ENCODE measurements at regions of chr1 and their contacts with region 1.

Region 1: DNA sequence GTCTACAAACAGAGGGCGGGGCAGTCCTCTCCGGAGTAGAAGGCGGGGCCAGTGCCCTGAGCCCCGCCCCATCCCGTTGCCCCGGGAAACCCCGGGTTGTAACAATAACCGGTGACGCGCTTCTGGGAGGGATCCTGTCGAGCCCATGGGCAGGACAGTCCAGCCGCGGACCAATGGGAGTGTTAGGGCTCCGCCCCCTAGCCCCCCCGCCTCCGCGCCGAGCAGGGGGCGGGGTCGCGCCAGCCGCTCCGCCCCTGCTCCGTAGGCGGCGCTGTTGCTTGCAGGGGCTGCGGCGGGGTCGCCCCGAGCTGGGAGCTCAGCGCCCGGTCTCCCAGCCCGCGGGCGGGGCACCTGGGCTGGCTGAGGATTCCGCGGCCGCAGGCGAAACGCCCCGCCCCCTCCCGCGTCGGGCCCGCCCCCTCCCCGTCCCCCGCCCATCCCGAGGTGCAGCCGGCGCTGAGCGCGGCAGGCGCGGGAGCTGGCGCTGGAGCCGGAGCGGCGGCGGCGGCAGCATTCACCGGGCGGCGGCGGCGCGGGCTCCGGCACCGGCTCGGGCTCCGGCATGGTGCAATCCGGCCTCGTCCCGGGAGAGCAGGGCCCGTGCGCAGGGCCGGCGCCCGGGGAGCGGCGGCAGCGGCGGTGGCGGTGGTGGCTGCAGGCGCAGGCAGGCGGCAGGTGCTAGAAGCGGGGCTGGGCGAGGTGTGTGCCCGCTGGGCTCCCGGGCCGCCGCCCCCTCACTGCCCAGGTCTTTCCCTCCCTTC is at the start of gene FOXO6:
- DNase-seq: peak; percentile 92 to 97
- ATAC-seq: peak; percentile 88 to 96 (median 93)
- H3K4me3 ChIP-seq: peak within 1 kb of the TSS; percentile 13
- H3K4me3 Mint-ChIP-seq: peak within 1 kb of the TSS; percentile 71
- H3K27ac ChIP-seq: peak within 1 kb of the TSS; percentile 1
- H3K27ac Mint-ChIP-seq: peak within 1 kb of the TSS; percentile 67 to 86
- H3K4me1 ChIP-seq: peaks cover 35% of the 10 kb centered on the region
- H3K4me1 Mint-ChIP-seq: peaks cover 0 to 32% of the 10 kb centered on the region in 2 donors
- H3K27me3 ChIP-seq: peaks cover 24% of the 10 kb centered on the region
- H3K27me3 Mint-ChIP-seq: peaks cover 31 to 43% of the 10 kb centered on the region in 2 donors
- CTCF ChIP-seq: no peak
- total RNA-seq, gene FOXO6: 1.2 to 3.3 (median 1.7) TPM

Region 2: DNA sequence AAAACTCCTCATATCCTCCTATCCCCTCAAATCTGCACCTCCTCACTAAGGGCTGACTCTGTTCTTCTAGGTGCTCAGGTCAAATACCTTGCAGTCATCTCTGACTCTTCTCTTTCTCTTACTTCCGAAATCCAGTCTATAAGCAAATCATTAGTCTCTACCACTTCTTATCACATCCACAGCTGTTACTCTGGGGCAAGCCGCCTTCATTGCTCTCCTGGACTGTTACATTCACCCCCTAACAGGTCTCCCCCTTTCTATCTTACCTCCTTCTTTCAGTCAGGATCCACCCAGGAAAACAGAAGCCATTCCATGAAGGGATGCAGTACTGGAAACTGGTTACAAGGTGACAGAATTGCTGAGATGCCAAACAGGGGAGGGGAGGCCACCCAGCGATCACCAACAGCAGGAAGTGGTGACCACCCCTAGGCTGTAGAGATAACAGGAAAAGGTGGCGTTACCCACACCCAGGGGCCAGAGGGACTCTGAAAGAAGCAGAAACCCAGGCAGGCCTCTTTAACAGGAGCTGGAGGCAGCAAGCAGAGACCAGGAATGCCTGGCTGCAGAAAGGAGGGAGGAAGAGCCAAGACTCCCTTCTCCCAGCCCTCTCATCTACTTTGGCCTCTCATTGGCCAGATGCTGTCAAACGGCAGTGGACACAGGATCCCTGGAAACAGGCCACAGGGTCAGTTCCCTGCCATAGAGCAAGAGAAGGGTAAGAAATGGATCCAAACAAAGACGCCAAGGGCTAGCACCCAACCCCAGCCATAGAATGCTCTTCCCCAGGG is 55.4 kb before region 1 on chr1:
- intact Hi-C with region 1: loop called (anchors 1 kb)
- DNase-seq: peak in 1 of 2 donors; percentile 52
- ATAC-seq: peak; percentile 76 to 90 (median 82)
- H3K4me3 ChIP-seq: peak overlapping the region; percentile 6
- H3K4me3 Mint-ChIP-seq: peak overlapping the region; percentile 88
- H3K27ac ChIP-seq: peak overlapping the region; percentile 74
- H3K27ac Mint-ChIP-seq: peak overlapping the region; percentile 77 to 82
- H3K4me1 ChIP-seq: peaks cover 27% of the 10 kb centered on the region
- H3K4me1 Mint-ChIP-seq: peaks cover 61 to 62% of the 10 kb centered on the region in 2 donors
- H3K27me3 ChIP-seq: no peaks in the 10 kb centered on the region
- H3K27me3 Mint-ChIP-seq: no peaks in the 10 kb centered on the region
- CTCF ChIP-seq: no peak

Region 3: GRCh38 chr1:41322835-41323627 is 38.1 kb before region 1 on chr1:
- intact Hi-C with region 1: no loop called
- DNase-seq: peak in 1 of 2 donors; percentile 46
- ATAC-seq: peak; percentile 41 to 81 (median 66)
- H3K4me3 ChIP-seq: no peak overlapping the region
- H3K4me3 Mint-ChIP-seq: no peak overlapping the region
- H3K27ac ChIP-seq: no peak overlapping the region
- H3K27ac Mint-ChIP-seq: no peak overlapping the region
- H3K4me1 ChIP-seq: peaks cover 12% of the 10 kb centered on the region
- H3K4me1 Mint-ChIP-seq: peaks cover 8 to 18% of the 10 kb centered on the region in 2 donors
- H3K27me3 ChIP-seq: no peaks in the 10 kb centered on the region
- H3K27me3 Mint-ChIP-seq: peaks cover 0 to 10% of the 10 kb centered on the region in 2 donors
- CTCF ChIP-seq: no peak

Region 4: GRCh38 chr1:41381692-41382477 is 20.7 kb after region 1 on chr1:
- intact Hi-C with region 1: loop called (anchors 2 kb)
- DNase-seq: peak; percentile 59 to 66
- ATAC-seq: peak; percentile 85 to 90 (median 85)
- H3K4me3 ChIP-seq: peak overlapping the region; percentile 19
- H3K4me3 Mint-ChIP-seq: peak overlapping the region; percentile 86
- H3K27ac ChIP-seq: no peak overlapping the region
- H3K27ac Mint-ChIP-seq: peak overlapping the region in 1 of 2 donors; percentile 36
- H3K4me1 ChIP-seq: peaks cover 20% of the 10 kb centered on the region
- H3K4me1 Mint-ChIP-seq: peaks cover 10 to 30% of the 10 kb centered on the region in 2 donors
- H3K27me3 ChIP-seq: peaks cover 23% of the 10 kb centered on the region
- H3K27me3 Mint-ChIP-seq: peaks cover 24 to 35% of the 10 kb centered on the region in 2 donors
- CTCF ChIP-seq: no peak

Measured in natural killer cell (primary cell).